ENCODE measurements at regions of chr19 and their contacts with region 1.

Region 1: GRCh38 chr19:12333162-12334159 is at the start of gene ZNF563:
- DNase-seq: peak; percentile 91 to 99 (median 98)
- ATAC-seq: peak; percentile 99
- H3K4me3 ChIP-seq: peak within 1 kb of the TSS; percentile 61
- H3K4me3 Mint-ChIP-seq: peak within 1 kb of the TSS; percentile 90 to 100 (median 96)
- H3K27ac ChIP-seq: peak within 1 kb of the TSS; percentile 92
- H3K27ac Mint-ChIP-seq: peak within 1 kb of the TSS; percentile 92 to 99 (median 97)
- H3K4me1 ChIP-seq: peaks cover 9 to 22% of the 10 kb centered on the region in 2 donors
- H3K4me1 Mint-ChIP-seq: peaks cover 23 to 49% (median 40%) of the 10 kb centered on the region in 7 donors
- H3K27me3 ChIP-seq: no peaks in the 10 kb centered on the region
- H3K27me3 Mint-ChIP-seq: no peaks in the 10 kb centered on the region
- total RNA-seq, gene ZNF563: 2.8 to 23.2 (median 6.1) TPM

Region 2: GRCh38 chr19:12162882-12163806 is 170.3 kb before region 1 on chr19 and contains the start of gene ZNF136:
- CTCF ChIA-PET with region 1: interaction called, 6 read pairs
- POLR2A ChIA-PET with region 1: interaction called, 26 read pairs
- intact Hi-C with region 1: loop called (anchors 1 kb)
- DNase-seq: peak; percentile 77 to 95 (median 91)
- ATAC-seq: peak; percentile 99
- H3K4me3 ChIP-seq: peak within 1 kb of the TSS; percentile 78
- H3K4me3 Mint-ChIP-seq: peak within 1 kb of the TSS; percentile 88 to 100 (median 98)
- H3K27ac ChIP-seq: peak within 1 kb of the TSS; percentile 96
- H3K27ac Mint-ChIP-seq: peak within 1 kb of the TSS; percentile 88 to 100 (median 98)
- H3K4me1 ChIP-seq: peaks cover 7 to 15% of the 10 kb centered on the region in 2 donors
- H3K4me1 Mint-ChIP-seq: peaks cover 28 to 64% (median 46%) of the 10 kb centered on the region in 7 donors
- H3K27me3 ChIP-seq: no peaks in the 10 kb centered on the region
- H3K27me3 Mint-ChIP-seq: no peaks in the 10 kb centered on the region
- total RNA-seq, gene ZNF136: 16.8 to 36.8 (median 31.1) TPM

Region 3: DNA sequence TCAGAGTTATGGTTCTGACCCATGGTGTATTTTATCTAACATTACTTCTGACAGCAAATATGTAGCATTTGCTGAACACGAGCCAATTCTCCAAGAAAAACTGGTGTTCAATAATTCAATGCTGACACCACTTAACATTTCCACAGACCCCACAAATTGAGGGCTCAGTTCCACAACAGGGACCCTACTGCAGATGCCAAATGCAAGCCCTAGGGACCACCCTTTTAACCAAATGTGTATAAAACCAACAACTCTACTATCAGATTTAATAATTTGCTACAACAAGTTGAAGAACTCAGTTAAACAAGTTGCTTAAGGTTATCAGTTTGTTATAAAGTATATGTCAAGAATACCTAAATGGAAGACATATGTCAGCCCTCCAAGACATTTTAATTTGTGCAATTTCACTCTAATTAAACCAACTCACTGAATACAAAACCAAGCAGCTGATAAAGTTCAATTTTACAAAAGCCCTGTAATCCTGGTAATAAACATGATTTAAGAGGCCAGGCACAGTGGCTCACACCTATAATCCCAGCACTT is 45.4 kb before region 1 on chr19:
- CTCF ChIA-PET with region 1: no interaction called
- POLR2A ChIA-PET with region 1: interaction called, 164 read pairs
- intact Hi-C with region 1: loop called (anchors 1 kb)
- DNase-seq: no peak
- ATAC-seq: no peak
- H3K4me3 ChIP-seq: no peak overlapping the region
- H3K4me3 Mint-ChIP-seq: peak overlapping the region in 5 of 10 donors; percentile 6 to 75 (median 48)
- H3K27ac ChIP-seq: peak overlapping the region; percentile 16
- H3K27ac Mint-ChIP-seq: peak overlapping the region; percentile 36 to 97 (median 70)
- H3K4me1 ChIP-seq: peaks cover 21 to 25% of the 10 kb centered on the region in 2 donors
- H3K4me1 Mint-ChIP-seq: peaks cover 25 to 71% (median 46%) of the 10 kb centered on the region in 7 donors
- H3K27me3 ChIP-seq: no peaks in the 10 kb centered on the region
- H3K27me3 Mint-ChIP-seq: no peaks in the 10 kb centered on the region

Region 4: DNA sequence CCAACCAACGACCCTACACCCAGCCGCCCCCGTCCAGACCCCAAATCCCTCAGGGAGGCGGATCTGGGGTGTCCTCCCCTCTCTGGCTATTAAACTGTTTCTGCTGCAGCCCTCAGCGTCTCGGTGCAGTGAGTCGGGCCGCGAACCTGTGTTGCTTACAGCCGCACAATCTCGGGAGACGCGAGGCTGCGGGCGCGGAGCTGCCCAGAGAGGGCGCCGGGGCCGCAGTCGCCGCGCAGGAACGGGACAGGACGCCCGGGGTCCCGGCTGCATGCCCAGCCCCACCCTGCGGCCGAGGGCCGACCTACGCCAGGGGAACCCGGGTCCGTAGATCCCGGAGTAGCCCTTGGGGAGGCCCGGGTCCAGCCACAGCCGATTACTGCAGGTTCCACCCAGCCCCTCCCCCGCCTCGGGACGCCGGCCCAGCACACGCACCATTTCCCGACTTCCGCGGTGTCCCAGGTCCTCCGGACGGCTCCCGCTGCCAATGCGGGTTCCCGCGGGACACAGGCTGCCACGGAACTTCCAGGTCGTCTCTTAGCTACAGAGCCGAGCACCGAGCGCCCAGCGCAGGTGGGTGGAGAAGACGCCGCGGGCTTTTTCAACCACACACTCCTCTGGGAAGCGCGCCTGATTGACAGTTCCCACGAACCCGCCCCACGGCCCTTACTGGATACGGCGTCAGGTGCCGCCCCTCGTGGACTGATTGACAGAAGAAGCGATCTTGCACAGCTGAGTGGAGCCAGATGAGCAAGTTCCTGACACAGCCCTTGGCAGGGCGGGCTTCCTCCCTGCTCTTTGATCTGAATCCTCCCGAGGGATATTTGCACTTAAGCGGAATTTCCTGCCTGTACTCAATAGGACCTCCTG is 67.4 kb after region 1 on chr19 and contains the start of gene ZNF799:
- CTCF ChIA-PET with region 1: no interaction called
- POLR2A ChIA-PET with region 1: no interaction called
- intact Hi-C with region 1: loop called (anchors 1 to 2 kb)
- DNase-seq: peak; percentile 55 to 79 (median 76)
- ATAC-seq: peak; percentile 96
- H3K4me3 ChIP-seq: peak within 1 kb of the TSS; percentile 91
- H3K4me3 Mint-ChIP-seq: peak within 1 kb of the TSS; percentile 88 to 96 (median 94)
- H3K27ac ChIP-seq: peak within 1 kb of the TSS; percentile 59
- H3K27ac Mint-ChIP-seq: peak within 1 kb of the TSS; percentile 75 to 93 (median 82)
- H3K4me1 ChIP-seq: no peaks in the 10 kb centered on the region
- H3K4me1 Mint-ChIP-seq: peaks cover 5 to 34% (median 20%) of the 10 kb centered on the region in 7 donors
- H3K27me3 ChIP-seq: no peaks in the 10 kb centered on the region
- H3K27me3 Mint-ChIP-seq: no peaks in the 10 kb centered on the region
- total RNA-seq, gene ZNF799: 1.7 to 9.9 (median 4.4) TPM

Region 5: DNA sequence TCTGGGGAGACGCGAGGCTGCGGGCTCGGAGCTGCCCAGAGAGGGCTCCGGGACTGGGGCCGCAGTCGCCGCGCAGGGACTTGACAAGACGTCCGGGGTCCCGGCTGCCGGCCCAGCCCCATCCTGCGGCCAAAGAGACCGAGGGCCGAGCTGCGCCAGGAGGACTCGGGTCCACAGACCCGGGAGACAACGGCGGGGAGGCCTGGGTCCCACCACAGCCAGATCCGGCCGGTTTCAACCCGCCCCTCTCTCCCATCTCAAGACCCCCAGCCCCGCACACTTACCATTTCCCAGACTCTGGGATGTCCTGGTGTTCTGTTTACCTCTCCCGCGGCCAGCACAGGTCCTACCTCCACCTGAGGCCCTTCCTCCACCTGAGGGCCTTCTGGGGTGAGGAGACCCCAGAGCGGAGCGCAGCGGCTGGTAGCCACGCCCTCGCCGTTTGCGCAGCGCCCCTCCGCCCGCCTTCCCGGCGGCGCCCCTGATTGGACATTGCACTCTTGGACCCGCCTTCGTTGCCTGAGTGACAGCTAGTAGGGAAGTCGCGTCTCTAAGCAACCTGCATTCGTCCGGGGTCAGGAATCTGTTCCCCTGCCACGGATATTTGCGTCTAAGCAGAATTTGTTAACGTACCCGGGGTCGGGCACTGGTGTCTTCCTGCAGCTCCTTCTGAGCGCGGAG is 151.1 kb after region 1 on chr19 and contains the start of gene ZNF709:
- CTCF ChIA-PET with region 1: no interaction called
- POLR2A ChIA-PET with region 1: interaction called, 13 read pairs
- intact Hi-C with region 1: no loop called
- DNase-seq: peak; percentile 75 to 89 (median 85)
- ATAC-seq: peak; percentile 99
- H3K4me3 ChIP-seq: peak within 1 kb of the TSS; percentile 98
- H3K4me3 Mint-ChIP-seq: peak within 1 kb of the TSS; percentile 90 to 99 (median 94)
- H3K27ac ChIP-seq: peak within 1 kb of the TSS; percentile 85
- H3K27ac Mint-ChIP-seq: peak within 1 kb of the TSS; percentile 87 to 97 (median 91)
- H3K4me1 ChIP-seq: peaks cover 0 to 14% of the 10 kb centered on the region in 2 donors
- H3K4me1 Mint-ChIP-seq: peaks cover 26 to 41% (median 33%) of the 10 kb centered on the region in 7 donors
- H3K27me3 ChIP-seq: no peaks in the 10 kb centered on the region
- H3K27me3 Mint-ChIP-seq: no peaks in the 10 kb centered on the region
- total RNA-seq, gene ZNF709: 2.2 to 8.0 (median 5.3) TPM

Measured in naive thymus-derived CD4-positive, alpha-beta T cell (primary cell).